ENCODE measurements at regions of chr9 and their contacts with region 1.

Region 1: GRCh38 chr9:3732077-3733038 is 206.6 kb upstream of the RFX3 start:
- DNase-seq: peak in 3 of 10 donors; percentile 11 to 36 (median 24)
- H3K4me3 ChIP-seq: peak overlapping the region in 31 of 59 donors; percentile 1 to 52 (median 30)
- H3K27ac ChIP-seq: peak overlapping the region in 23 of 59 donors; percentile 2 to 69 (median 37)
- H3K27me3 ChIP-seq: no peaks in the 10 kb centered on the region
- CTCF ChIP-seq: peak; percentile 37 to 80 (median 73)

Region 2: GRCh38 chr9:4197548-4197947 is 465.2 kb after region 1 on chr9:
- intact Hi-C with region 1: loop called in 1 of 2 experiments (anchors 10 kb)
- DNase-seq: no peak
- H3K4me3 ChIP-seq: no peak overlapping the region
- H3K27ac ChIP-seq: no peak overlapping the region
- H3K27me3 ChIP-seq: peaks cover 0 to 3% (median 0%) of the 10 kb centered on the region in 45 donors
- CTCF ChIP-seq: peak in 50 of 56 donors; percentile 10 to 69 (median 50)

Region 3: DNA sequence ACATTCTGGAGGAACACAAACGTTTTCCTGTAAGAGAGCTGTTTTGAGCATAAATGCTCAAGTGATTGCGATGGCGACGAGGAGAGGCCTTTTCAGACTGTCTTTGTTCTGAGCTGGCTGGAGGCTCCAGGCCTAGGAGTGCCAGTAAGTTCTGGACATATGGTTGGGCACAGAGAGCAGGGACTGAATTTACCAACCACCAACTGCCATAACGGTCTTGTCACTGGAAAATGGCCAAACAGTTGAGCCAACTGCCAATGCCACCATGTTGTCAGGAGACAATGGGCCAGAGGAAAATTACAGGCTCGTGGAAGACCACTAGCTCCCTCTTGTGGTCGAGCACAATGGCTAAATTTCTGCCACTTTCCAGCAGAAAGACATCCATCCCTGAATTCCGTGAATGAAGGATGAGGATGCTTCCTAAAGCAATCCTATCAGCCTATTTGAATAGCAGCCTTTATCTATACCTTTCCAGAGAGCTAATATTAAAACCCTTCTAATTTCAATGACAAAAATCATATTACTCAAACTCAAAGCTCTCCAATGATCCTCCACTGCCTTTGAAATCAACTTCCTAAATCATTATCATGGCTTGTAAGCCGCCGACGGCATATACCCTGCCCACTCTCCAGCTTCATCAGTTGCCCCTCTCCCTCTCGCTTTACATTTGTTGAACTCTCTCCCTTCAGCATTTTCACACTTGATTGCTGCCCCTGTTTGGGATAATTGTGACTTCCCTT is 634.4 kb after region 1 on chr9:
- intact Hi-C with region 1: loop called in 1 of 2 experiments (anchors 10 kb)
- DNase-seq: peak in 9 of 10 donors; percentile 47 to 80 (median 68)
- H3K4me3 ChIP-seq: no peak overlapping the region
- H3K27ac ChIP-seq: peak overlapping the region in 45 of 59 donors; percentile 3 to 85 (median 55)
- H3K27me3 ChIP-seq: no peaks in the 10 kb centered on the region
- CTCF ChIP-seq: peak; percentile 62 to 89 (median 80)